ENCODE measurements at regions of chr19 and their contacts with region 1.

Region 1: DNA sequence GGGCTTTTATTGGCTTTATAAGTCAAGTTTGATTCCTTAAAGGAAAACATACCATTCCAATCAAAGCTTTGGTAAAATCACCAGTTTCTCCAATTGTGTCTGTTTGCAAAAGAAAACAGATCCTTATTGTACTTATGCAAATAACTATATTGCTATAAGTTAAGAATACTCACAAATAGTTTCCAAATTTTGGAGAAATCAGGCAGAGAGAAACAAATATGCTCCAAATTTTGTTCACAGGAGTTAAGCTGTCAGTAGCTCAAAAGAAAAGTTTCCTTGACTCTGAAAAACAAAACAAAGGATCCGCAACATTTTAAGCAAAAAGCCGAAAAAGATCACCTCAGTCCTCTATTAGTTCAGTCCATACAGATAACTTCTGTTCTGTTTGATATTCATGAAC is 19.2 kb upstream of the IGFL4 start:
- DNase-seq: no peak
- ATAC-seq: no peak
- H3K4me3 ChIP-seq: no peak overlapping the region
- H3K27ac ChIP-seq: no peak overlapping the region
- H3K4me1 ChIP-seq: peaks cover 0 to 6% of the 10 kb centered on the region in 2 experiments; a peak in 1 of 4 replicates
- H3K27me3 ChIP-seq: peaks cover 67% of the 10 kb centered on the region
- CTCF ChIP-seq: no peak
- POLR2A ChIP-seq: no peak
- RAD21 ChIP-seq: no peak

Region 2: DNA sequence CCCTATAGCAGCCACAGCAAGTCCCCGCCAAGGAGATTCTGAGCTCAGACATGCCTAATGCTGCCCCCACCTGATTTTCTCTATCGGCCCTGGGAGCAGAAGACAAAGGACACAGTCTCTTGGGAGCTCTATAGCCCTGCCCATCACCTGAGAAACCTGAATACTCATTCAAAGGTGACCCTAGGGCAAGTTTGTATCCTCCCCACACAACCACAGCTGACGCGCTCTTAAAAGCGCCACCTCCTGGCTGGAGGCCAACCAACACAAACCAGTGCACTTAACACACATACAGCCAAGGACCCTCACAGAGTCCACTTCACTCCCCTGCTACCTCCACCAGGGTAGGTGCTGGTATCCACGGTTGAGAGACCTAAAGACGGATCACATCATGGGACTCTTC is 10.4 kb before region 1 on chr19:
- CTCF ChIA-PET with region 1: no interaction called
- POLR2A ChIA-PET with region 1: no interaction called
- RAD21 ChIA-PET with region 1: no interaction called
- intact Hi-C with region 1: loop called (anchors 1 kb)
- DNase-seq: no peak
- ATAC-seq: peak; percentile 63
- H3K4me3 ChIP-seq: no peak overlapping the region
- H3K27ac ChIP-seq: no peak overlapping the region
- H3K4me1 ChIP-seq: no peaks in the 10 kb centered on the region
- H3K27me3 ChIP-seq: peaks cover 30% of the 10 kb centered on the region
- CTCF ChIP-seq: peak in 1 of 3 experiments; percentile 47; a peak in 2 of 6 replicates
- POLR2A ChIP-seq: no peak
- RAD21 ChIP-seq: no peak